ENCODE measurements at regions of chr3 and their contacts with region 1.

Region 1: DNA sequence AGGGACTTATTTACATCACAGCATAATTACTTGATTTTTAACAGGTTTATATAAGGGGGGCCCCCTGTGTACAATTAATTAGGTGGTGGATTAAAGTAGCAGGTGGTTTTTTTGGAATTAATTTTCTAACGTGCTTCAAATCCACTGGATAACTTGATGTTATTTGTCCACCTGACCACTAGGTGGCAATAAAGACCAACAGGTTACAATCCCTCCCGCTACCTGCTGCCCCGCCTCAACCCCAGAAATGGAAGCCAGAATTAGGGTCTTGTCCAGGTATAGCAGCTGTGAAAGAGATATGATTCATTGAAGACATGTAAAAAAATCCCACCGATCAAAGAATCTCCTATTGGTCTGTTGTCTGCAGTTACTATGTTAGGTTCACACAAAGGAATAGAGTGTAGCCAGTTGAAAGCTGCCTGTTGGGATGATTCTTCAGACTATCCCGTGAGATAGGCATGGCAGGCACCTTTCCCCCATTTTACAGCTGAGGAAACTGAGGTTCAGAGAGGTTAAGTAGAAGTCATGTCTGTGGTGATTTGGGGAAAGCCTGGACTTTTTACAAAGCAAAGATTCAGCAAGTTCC is 44.0 kb downstream of the MFSD1 start:
- DNase-seq: no peak
- H3K4me3 ChIP-seq: no peak overlapping the region
- CTCF ChIP-seq: peak; percentile 45

Region 2: DNA sequence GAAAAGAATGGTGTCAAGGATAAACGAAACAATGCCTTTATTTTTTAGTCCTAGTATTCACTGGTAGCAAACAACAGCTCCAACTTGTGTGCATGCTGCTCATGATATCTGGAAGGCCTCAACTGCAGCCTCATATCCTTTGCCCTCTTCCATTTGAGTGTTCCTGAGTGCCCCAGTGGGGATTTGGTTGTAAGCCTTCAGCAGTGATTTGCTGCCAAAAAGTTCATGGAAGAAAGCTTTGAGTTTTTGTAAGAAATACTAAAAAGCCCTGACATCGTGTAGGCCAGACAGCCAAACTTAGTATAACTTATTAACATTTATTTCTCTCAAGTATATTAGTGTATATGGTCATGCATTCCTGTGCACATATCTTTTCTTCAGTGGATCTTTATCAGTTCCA is 14.0 kb before region 1 on chr3:
- CTCF ChIA-PET with region 1: interaction called, 16 read pairs
- POLR2A ChIA-PET with region 1: no interaction called
- DNase-seq: no peak
- H3K4me3 ChIP-seq: no peak overlapping the region
- CTCF ChIP-seq: no peak

Region 3: DNA sequence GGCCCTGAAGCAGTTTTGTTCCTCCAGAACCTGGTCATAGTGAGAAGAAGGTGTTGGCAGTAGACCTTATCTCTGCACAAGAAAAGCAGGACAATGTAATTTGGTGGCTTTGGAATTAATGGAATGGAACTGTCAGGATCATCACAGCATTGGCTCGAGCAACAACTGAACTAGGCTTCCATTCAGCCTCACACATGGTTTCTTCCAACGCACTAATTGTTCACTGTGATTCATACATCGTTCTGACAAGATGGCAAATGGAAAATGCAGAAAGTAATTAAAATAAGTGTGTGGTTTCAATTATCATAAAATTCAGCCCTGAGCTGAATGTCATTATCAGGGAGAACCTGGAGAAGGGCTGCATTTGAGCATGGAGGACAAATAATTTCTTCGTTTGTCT is 36.6 kb after region 1 on chr3:
- CTCF ChIA-PET with region 1: no interaction called
- POLR2A ChIA-PET with region 1: no interaction called
- DNase-seq: no peak
- H3K4me3 ChIP-seq: no peak overlapping the region
- CTCF ChIP-seq: no peak

Region 4: GRCh38 chr3:158918008-158918407 is 72.2 kb after region 1 on chr3:
- CTCF ChIA-PET with region 1: interaction called, 12 read pairs
- POLR2A ChIA-PET with region 1: no interaction called
- DNase-seq: peak; percentile 29
- H3K4me3 ChIP-seq: no peak overlapping the region
- CTCF ChIP-seq: peak; percentile 75

Measured in AG04449 (cell line).